Right ventricle myocardium superior (tissue), 1 donor: ENCODE measurements at regions of chr12 and their contacts with region 1.

Region 1: GRCh38 chr12:79174626-79175025 is 310.1 kb downstream of the SYT1 start:
- DNase-seq: no peak
- ATAC-seq: peak; percentile 79

Region 2: GRCh38 chr12:78146365-78146772 is 1028.3 kb before region 1 on chr12:
- intact Hi-C with region 1: loop called (anchors 10 kb)
- DNase-seq: no peak
- ATAC-seq: peak; percentile 46

Region 3: GRCh38 chr12:79344855-79345847 is 170.5 kb after region 1 on chr12:
- intact Hi-C with region 1: no loop called
- DNase-seq: no peak
- ATAC-seq: peak; percentile 71